ENCODE measurements at regions of chr17 and their contacts with region 1.

Region 1: DNA sequence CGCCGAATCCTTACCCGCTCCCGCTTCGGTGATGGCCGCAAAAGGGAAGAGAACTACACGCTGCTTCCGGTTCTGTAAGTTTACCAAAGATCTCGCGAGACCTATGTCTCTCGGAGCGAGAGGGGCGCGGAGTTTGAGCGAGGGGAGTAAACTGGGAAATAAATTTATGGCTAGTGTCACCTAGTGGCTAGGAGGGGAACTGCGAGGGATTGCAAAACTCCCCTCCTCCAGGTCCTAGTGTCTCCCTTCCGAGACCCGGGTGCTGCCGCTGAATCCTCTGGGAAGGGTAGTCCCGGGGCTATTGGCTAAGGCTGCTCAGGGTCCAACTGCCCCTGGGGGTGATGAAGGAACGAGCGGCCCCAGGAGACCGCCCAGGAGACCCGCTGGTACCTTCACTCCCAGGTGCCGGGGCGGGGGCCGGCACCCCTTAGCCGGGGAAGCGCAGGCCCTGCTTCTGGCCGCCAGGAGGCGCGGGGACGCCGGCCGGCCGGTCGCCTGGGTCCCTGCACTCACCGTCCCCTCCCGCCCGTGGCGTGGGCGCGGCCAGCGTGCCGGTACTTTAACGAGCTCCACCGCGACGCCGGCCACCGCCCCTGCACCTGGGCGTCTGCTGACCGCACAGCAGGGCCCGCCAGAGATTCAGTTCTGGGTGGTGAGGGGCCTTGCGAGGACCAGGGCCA is at the start of gene RPL26:
- DNase-seq: peak; percentile 98
- ATAC-seq: peak; percentile 92
- H3K4me3 Mint-ChIP-seq: peak within 1 kb of the TSS; percentile 97
- H3K27ac Mint-ChIP-seq: peak within 1 kb of the TSS; percentile 98
- H3K4me1 Mint-ChIP-seq: peaks cover 50% of the 10 kb centered on the region
- H3K27me3 Mint-ChIP-seq: no peaks in the 10 kb centered on the region
- CTCF ChIP-seq: peak; percentile 100
- total RNA-seq, gene RPL26: 3,141 to 3,176 TPM

Region 2: GRCh38 chr17:8369944-8370343 is 13.3 kb before region 1 on chr17:
- CTCF ChIA-PET with region 1: interaction called, 5 read pairs
- POLR2A ChIA-PET with region 1: interaction called, 12 read pairs
- intact Hi-C with region 1: no loop called
- DNase-seq: no peak
- ATAC-seq: no peak
- H3K4me3 Mint-ChIP-seq: no peak overlapping the region
- H3K27ac Mint-ChIP-seq: peak overlapping the region; percentile 12
- H3K4me1 Mint-ChIP-seq: peaks cover 2% of the 10 kb centered on the region
- H3K27me3 Mint-ChIP-seq: no peaks in the 10 kb centered on the region
- CTCF ChIP-seq: no peak

Region 3: DNA sequence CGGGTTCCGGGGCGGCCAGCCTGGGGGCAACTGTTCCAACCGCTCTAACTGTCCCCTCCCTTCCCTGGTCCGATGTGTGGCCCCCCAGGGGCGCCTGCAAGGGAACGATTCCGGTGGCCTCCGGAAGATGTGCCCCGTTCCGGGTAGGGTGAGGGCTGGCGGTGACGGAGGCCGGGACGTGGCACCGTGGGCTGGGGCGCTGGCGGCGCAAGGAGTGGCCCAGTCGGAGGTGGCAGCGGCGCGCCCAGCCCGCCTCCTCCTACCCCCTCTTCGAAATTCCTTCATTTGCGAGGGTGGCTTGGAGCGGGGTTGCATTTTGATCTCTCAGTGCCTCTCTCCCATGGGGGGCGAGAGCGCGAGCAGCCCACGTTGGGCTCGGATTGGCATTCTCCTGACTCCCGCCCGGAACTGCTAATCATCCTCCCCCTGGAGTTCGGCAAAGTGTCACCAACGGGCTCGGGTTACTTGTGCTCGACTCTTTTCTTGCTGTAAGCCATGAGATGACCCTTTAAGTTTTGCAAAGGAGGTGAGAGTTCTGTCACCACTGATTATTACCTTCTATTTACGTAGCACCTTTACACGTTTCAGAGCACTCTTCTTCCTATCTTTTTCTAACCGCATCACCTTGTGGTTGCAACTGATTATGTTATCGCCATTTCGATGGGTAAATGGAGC is 53.0 kb after region 1 on chr17:
- CTCF ChIA-PET with region 1: interaction called, 10 read pairs
- POLR2A ChIA-PET with region 1: interaction called, 5 read pairs
- intact Hi-C with region 1: no loop called
- DNase-seq: peak; percentile 75
- ATAC-seq: peak; percentile 58
- H3K4me3 Mint-ChIP-seq: peak overlapping the region; percentile 86
- H3K27ac Mint-ChIP-seq: peak overlapping the region; percentile 91
- H3K4me1 Mint-ChIP-seq: peaks cover 34% of the 10 kb centered on the region
- H3K27me3 Mint-ChIP-seq: no peaks in the 10 kb centered on the region
- CTCF ChIP-seq: no peak

Region 4: GRCh38 chr17:8745586-8746500 is 362.6 kb after region 1 on chr17:
- CTCF ChIA-PET with region 1: interaction called, 17 read pairs
- POLR2A ChIA-PET with region 1: interaction called, 7 read pairs
- intact Hi-C with region 1: loop called (anchors 10 kb)
- DNase-seq: peak; percentile 83
- ATAC-seq: peak; percentile 74
- H3K4me3 Mint-ChIP-seq: peak overlapping the region; percentile 82
- H3K27ac Mint-ChIP-seq: peak overlapping the region; percentile 88
- H3K4me1 Mint-ChIP-seq: peaks cover 12% of the 10 kb centered on the region
- H3K27me3 Mint-ChIP-seq: no peaks in the 10 kb centered on the region
- CTCF ChIP-seq: peak; percentile 99

Region 5: DNA sequence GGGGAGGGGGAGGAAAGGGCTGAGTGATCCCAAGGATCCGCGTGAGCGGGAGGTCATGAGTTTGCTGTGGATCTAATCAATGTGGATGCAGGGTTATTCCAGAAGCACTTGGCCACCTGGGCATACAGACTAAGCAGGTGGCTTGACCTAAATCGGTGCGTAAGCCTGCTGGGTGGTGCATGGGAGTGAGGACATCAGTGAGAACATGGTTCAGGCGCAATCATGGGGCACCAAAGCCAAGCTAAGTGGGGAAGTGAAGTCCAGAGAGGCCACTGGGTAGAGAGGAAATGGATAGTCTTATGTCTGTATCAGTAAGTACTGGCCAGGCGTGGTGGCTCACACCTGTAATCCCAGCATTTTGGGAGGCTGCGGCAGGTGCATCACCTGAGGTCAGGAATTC is 434.8 kb after region 1 on chr17:
- CTCF ChIA-PET with region 1: no interaction called
- POLR2A ChIA-PET with region 1: no interaction called
- intact Hi-C with region 1: no loop called
- DNase-seq: no peak
- ATAC-seq: no peak
- H3K4me3 Mint-ChIP-seq: no peak overlapping the region
- H3K27ac Mint-ChIP-seq: no peak overlapping the region
- H3K4me1 Mint-ChIP-seq: no peaks in the 10 kb centered on the region
- H3K27me3 Mint-ChIP-seq: no peaks in the 10 kb centered on the region
- CTCF ChIP-seq: no peak

Measured in activated CD8-positive, alpha-beta T cell treated with anti-CD3 and anti-CD28 coated beads for 36 hours (primary cell).